Pancreas (tissue), 10 donors: ENCODE measurements at regions of chr5 and their contacts with region 1.

Region 1: GRCh38 chr5:135950611-135951010 is 4.2 kb downstream of the LECT2 start:
- DNase-seq: no peak
- ATAC-seq: no peak
- H3K4me3 ChIP-seq: no peak overlapping the region
- H3K27ac ChIP-seq: no peak overlapping the region
- H3K4me1 ChIP-seq: no peaks in the 10 kb centered on the region
- H3K27me3 ChIP-seq: no peaks in the 10 kb centered on the region
- CTCF ChIP-seq: no peak

Region 2: DNA sequence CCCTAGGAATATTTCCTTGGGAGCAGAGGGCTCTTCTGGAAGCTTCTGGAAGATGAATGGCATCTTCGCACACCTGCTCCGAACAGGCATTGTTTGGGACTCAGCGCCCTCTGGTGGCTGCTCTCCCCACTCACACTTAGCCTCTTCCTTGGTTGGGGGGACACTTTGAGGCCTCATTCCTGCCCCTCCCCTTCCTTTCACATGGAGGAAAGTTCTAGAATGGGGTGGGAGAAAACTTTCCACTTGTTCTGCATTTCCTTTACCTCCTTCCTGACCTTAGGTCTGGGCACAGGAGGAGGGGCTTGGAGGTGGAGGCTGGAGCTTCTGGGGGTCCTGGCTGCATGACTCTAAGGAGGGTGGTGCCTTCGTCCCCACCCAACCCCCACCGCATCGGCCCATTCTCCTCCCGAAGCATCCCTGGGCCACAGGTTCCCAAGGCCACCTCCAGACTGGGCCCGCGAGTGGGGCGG is 261.7 kb after region 1 on chr5:
- intact Hi-C with region 1: loop called in 1 of 3 experiments (anchors 5 kb)
- DNase-seq: peak; percentile 23 to 87 (median 61)
- ATAC-seq: peak; percentile 68 to 91 (median 82)
- H3K4me3 ChIP-seq: no peak overlapping the region
- H3K27ac ChIP-seq: no peak overlapping the region
- H3K4me1 ChIP-seq: no peaks in the 10 kb centered on the region
- H3K27me3 ChIP-seq: no peaks in the 10 kb centered on the region
- CTCF ChIP-seq: peak; percentile 49 to 86 (median 78)